ENCODE measurements at regions of chr1 and their contacts with region 1.

Region 1: GRCh38 chr1:57258557-57259325 is 165.1 kb downstream of the DAB1 start:
- DNase-seq: no peak
- ATAC-seq: no peak

Region 2: DNA sequence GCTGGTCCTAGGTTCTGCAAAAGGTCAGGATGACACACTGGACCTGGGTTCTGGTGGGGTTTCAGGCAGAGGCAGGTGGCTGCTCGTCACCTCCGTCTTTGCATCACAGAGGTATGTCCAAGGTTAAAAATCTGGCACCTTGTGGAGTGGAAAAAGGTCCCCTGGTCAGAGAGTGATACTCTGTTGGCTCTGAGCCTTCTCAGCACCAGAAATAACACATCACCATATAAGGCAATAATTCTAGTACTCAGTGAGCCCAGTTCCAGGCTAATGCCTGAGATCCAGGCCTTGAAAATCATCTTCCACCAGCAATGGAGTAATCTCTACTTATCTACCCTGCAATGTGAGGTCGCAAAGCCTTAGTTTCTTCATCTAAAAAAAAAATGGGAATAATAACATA is 165.6 kb before region 1 on chr1:
- intact Hi-C with region 1: no loop called
- DNase-seq: no peak
- ATAC-seq: peak; percentile 35 to 61

Region 3: GRCh38 chr1:57468641-57469523 is 210.1 kb after region 1 on chr1:
- intact Hi-C with region 1: loop called in 1 of 2 experiments (anchors 5 kb)
- DNase-seq: no peak
- ATAC-seq: peak in 1 of 2 donors; percentile 81

Measured in left cardiac atrium (tissue), 4 donors.